ENCODE measurements at regions of chr1 and their contacts with region 1.

Region 1: GRCh38 chr1:84753516-84754385 is 63.5 kb upstream of the SSX2IP start:
- DNase-seq: peak; percentile 82
- H3K4me3 ChIP-seq: peak overlapping the region in 1 of 2 experiments; percentile 24; a peak in 1 of 4 replicates
- H3K27ac ChIP-seq: no peak overlapping the region
- H3K4me1 ChIP-seq: peaks cover 0 to 3% of the 10 kb centered on the region in 2 experiments; a peak in 1 of 4 replicates
- H3K27me3 ChIP-seq: no peaks in the 10 kb centered on the region
- CTCF ChIP-seq: peak; percentile 99
- EP300 ChIP-seq: no peak
- RAD21 ChIP-seq: peak; percentile 99

Region 2: DNA sequence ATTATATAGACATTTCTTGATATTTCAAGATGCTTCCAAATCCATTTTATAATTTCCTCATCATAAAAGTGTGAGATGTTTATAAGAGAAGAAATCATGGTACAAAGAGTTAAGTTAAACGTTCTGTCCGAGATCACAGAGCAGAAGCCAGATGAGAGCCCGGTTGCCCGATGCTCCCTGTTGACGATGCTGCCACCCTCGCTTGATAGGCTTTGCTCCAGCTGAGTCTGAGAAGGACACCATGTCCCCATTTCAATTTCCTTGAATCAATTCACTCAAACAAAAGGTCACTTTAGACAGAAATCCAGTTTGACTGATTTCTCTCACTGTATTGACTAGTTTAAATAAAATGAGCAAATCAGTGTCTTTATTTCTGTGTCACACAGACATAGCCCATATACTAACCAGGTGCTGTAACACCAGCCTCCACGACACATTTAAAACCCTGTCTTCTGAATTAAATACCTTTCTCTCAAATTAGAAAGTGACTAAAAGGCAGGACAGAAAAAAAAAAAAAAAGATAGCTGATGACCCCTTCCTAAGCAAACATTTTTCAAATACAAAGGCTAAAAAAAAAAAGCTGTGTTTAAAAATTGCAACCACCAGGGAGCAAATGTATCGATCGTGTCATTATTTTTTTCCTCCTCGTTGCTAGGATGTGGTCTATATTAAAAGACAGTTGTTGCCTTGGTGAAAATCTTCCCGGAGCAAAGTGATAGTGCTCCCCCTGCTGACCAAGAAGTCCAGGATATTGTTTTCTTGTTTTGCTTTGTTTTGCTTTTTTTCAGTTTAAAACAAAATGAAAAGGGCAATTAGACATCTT is 320.3 kb before region 1 on chr1:
- CTCF ChIA-PET with region 1: interaction called, 14 read pairs
- POLR2A ChIA-PET with region 1: no interaction called
- DNase-seq: peak; percentile 59
- H3K4me3 ChIP-seq: peak overlapping the region; percentile 39
- H3K27ac ChIP-seq: peak overlapping the region; percentile 37 to 65; a peak in 2 of 4 replicates
- H3K4me1 ChIP-seq: peaks cover 4 to 9% of the 10 kb centered on the region in 2 experiments; a peak in 3 of 4 replicates
- H3K27me3 ChIP-seq: no peaks in the 10 kb centered on the region
- CTCF ChIP-seq: peak; percentile 93
- EP300 ChIP-seq: no peak
- RAD21 ChIP-seq: peak; percentile 94

Region 3: DNA sequence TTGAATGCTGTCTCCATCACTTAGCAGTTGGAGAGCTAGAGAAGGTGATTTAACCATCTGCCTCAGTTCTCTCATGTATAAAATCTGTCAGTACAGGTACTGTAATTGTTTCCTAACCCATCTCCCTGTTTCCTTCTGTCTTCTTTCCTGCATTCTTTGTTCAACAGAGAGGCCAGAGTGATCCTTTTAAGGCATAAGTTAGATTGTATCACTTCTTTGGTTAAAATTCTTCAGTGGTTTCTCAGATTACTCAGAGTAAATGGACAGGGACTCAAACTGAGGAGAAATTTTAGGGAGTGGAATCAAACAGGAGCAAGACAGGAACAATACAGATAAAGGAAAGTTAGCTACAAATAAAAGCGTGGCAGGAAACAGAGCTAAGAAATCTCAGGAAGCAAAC is 18.3 kb before region 1 on chr1:
- CTCF ChIA-PET with region 1: interaction called, 25 read pairs
- POLR2A ChIA-PET with region 1: no interaction called
- DNase-seq: no peak
- H3K4me3 ChIP-seq: no peak overlapping the region
- H3K27ac ChIP-seq: peak overlapping the region; percentile 28 to 61; a peak in 2 of 4 replicates
- H3K4me1 ChIP-seq: no peaks in the 10 kb centered on the region; a peak in 2 of 4 replicates
- H3K27me3 ChIP-seq: no peaks in the 10 kb centered on the region
- CTCF ChIP-seq: no peak
- EP300 ChIP-seq: peak in 1 of 2 experiments; percentile 58; a peak in 1 of 4 replicates
- RAD21 ChIP-seq: no peak

Region 4: DNA sequence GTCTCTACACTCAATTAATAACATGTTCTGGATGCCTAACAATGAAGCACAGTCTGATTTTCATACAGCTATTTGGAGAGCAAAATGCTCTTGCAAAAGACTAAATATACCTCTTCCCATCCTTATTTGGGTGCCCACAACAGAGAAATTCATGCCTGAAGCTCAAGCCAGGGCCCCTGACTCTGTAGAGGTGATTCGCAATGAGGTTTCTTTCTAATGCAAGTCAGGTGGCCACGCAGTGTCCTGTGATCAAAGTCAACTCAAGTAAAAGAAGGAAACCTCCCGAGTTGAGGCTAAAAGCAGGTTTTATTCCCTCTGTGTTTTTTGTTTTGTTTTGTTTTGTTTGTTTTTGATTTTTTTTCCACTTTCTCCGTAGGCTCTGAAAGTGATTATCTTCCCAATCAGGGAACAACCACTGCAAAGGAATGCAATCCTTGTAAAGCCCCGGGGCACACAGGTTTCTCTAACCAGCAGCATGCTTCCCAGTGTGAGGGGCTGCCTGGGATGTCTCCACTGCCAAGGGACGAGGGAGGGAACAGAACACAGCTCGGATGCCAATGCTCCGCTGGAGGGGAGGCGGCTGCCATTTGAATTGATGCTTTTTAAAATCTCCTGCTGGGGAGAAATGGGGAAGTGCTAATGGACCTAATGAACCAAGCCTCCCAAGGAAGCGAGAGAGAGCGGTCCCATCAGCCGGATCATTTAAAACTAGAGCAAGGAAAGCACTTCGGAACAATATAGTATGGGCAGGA is 10.3 kb after region 1 on chr1:
- CTCF ChIA-PET with region 1: interaction called, 29 read pairs
- POLR2A ChIA-PET with region 1: no interaction called
- DNase-seq: no peak
- H3K4me3 ChIP-seq: no peak overlapping the region
- H3K27ac ChIP-seq: no peak overlapping the region
- H3K4me1 ChIP-seq: no peaks in the 10 kb centered on the region
- H3K27me3 ChIP-seq: 0 out of 2 replicates have a peak, but pooled peaks cover 4% of the 10 kb centered on the region
- CTCF ChIP-seq: no peak
- EP300 ChIP-seq: no peak
- RAD21 ChIP-seq: no peak

Region 5: DNA sequence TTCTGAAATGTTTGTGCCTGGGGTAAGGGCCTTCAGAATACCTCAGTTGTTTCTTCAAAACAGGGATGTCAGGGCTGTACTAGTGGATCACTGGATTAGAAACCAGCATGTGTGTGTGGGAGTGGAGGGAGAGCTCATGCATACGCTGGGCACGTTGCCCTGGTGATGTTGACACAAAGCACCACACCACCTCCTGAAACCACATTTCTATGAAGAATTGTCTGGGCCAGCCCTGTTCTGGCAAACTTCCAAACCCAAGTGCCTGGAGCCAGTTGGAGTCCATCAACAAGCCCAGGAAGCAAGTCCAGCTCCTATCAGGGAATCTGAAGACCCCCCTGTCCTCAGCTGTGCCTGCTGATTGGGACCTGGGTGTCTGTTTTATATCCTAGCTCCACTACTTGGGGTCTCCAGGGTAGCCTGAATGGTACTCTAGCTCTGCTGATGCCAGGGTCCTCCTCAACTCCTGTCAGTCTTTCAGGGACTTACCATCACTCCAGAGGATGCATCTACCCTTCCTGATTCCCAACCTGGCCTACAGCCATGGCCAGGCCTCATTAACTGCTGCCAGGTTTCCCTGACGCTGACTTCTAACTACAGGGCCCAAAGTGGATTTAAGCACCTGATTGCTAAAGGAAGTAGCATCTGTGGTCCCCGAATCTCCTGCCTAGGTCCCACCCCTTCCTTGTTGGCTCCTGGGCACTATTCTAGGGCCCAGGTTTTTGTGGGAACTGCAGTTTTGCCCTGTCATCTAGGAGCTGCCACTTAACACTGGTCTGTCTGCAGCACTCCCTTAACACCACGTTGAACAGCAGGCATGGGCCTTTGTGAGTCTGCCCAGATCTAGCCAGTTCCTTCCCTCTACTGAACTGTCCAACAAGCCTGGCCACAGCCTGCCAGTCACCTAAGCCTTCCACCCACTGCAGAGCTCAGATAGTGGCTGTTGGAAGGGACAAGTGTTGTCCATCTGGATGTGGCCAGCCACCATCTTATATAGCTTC is 93.8 kb after region 1 on chr1:
- CTCF ChIA-PET with region 1: no interaction called
- POLR2A ChIA-PET with region 1: no interaction called
- DNase-seq: peak; percentile 77
- H3K4me3 ChIP-seq: no peak overlapping the region
- H3K27ac ChIP-seq: peak overlapping the region in 1 of 2 experiments; percentile 98; a peak in 3 of 4 replicates
- H3K4me1 ChIP-seq: peaks cover 0 to 22% of the 10 kb centered on the region in 2 experiments; a peak in 3 of 4 replicates
- H3K27me3 ChIP-seq: no peaks in the 10 kb centered on the region; the same call in 1 of the 2 replicates
- CTCF ChIP-seq: no peak
- EP300 ChIP-seq: peak; percentile 32 to 92; a peak in 3 of 4 replicates
- RAD21 ChIP-seq: no peak

Region 6: DNA sequence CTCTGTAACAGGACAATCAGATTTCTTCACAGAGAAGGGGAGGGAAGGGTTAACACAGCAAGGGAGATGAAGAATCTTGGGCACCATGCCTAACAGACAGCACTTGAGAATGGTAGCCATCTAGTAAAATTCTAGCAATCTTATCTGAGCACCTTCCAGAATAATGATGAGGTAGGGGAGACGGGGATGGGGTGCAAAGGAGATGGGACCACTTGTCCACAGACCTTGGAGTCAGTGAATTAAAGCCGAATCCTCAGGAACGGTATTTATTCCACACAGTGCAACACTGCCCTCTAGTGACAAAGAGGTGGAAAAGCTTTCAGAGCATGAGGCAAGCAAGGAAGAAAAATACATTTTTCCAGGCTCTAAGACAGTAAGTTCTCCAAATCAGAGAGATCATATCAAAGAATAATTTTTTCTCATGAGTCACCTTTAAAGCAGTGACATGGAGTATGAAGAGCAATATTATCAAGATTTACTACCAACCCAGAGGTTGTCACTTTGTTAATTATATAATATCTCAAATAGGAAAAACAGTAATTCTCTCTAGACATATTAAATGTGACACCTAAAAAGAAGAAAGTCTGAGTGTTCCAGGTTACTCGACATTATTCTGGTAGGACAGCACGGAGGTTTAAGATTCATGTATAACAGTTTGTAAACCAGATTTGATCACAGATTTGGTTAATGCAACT is 182.5 kb after region 1 on chr1:
- CTCF ChIA-PET with region 1: interaction called, 32 read pairs
- POLR2A ChIA-PET with region 1: no interaction called
- DNase-seq: peak; percentile 62
- H3K4me3 ChIP-seq: peak overlapping the region in 1 of 2 experiments; percentile 44; a peak in 1 of 4 replicates
- H3K27ac ChIP-seq: no peak overlapping the region; a peak in 1 of 4 replicates
- H3K4me1 ChIP-seq: no peaks in the 10 kb centered on the region; a peak in 1 of 4 replicates
- H3K27me3 ChIP-seq: peaks cover 11% of the 10 kb centered on the region; the same call in 1 of the 2 replicates
- CTCF ChIP-seq: peak; percentile 94
- EP300 ChIP-seq: no peak
- RAD21 ChIP-seq: peak; percentile 97

Region 7: GRCh38 chr1:85360730-85361493 is 607.2 kb after region 1 on chr1:
- CTCF ChIA-PET with region 1: no interaction called
- POLR2A ChIA-PET with region 1: no interaction called
- DNase-seq: no peak
- H3K4me3 ChIP-seq: no peak overlapping the region; a peak in 1 of 4 replicates
- H3K27ac ChIP-seq: peak overlapping the region in 1 of 2 experiments; percentile 93; a peak in 3 of 4 replicates
- H3K4me1 ChIP-seq: peaks cover 6 to 83% of the 10 kb centered on the region in 2 experiments; a peak in 3 of 4 replicates
- H3K27me3 ChIP-seq: no peaks in the 10 kb centered on the region
- CTCF ChIP-seq: no peak
- EP300 ChIP-seq: no peak
- RAD21 ChIP-seq: no peak

Measured in SK-N-SH (cell line).